Heart left ventricle (tissue), 16 donors: ENCODE measurements at regions of chr16 and their contacts with region 1.

Region 1: GRCh38 chr16:80380514-80380913 is 160.3 kb upstream of the DYNLRB2 start:
- DNase-seq: no peak
- ATAC-seq: no peak
- H3K4me3 ChIP-seq: no peak overlapping the region
- H3K27ac ChIP-seq: no peak overlapping the region
- H3K4me1 ChIP-seq: no peaks in the 10 kb centered on the region
- H3K27me3 ChIP-seq: peaks cover 0 to 3% (median 0%) of the 10 kb centered on the region in 9 donors
- CTCF ChIP-seq: no peak
- POLR2A ChIP-seq: no peak

Region 2: GRCh38 chr16:80390871-80391489 is 10.5 kb after region 1 on chr16:
- intact Hi-C with region 1: loop called in 1 of 10 experiments (anchors 1 kb)
- DNase-seq: no peak
- ATAC-seq: no peak
- H3K4me3 ChIP-seq: no peak overlapping the region
- H3K27ac ChIP-seq: no peak overlapping the region
- H3K4me1 ChIP-seq: peaks cover 0 to 4% (median 0%) of the 10 kb centered on the region in 12 donors
- H3K27me3 ChIP-seq: peaks cover 0 to 2% (median 0%) of the 10 kb centered on the region in 9 donors
- CTCF ChIP-seq: no peak
- POLR2A ChIP-seq: no peak